ENCODE measurements at regions of chr17 and their contacts with region 1.

Region 1: DNA sequence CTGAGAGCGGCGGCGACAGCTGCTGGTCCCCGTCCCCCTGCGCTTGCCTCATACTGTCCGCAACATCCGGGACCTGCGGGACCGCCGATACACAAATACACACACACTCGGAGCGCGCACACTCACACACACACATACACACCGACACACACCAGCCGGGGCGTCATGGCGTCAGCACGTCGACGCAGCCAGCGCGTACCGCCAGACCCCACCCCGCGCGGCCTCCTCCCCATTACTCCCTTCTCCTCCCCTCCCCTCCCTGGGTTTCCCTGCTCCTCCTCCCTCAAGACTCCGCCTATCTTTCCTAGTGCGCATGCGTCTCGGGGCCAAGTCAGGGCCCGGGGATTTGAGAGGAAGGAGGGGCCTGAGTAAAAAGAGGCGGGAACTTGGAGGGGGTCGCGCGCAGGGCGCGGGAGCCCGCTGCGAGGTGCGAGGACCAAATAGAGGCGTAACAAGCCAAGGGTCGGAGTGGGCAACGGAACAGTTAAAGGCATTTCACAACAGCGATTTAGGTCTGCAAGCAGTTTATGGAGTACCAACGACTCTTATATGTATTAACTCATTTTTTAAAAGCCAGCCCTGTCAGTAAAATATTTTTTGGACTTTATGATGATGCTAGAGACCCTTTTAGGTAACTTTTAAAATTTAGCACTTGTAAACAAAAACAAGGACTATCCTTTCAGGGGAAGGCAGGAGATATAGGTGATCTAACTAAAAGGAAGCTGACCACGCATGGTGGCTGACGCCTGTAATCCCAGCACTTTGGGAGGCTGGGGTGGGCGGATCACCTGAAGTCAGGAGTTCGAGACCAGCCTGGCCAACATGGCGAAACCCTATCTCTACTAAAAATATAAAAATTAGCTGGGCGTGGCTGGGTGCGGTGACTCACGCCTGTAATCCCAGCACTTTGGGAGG is at the start of gene SPOP:
- H3K4me3 Mint-ChIP-seq: peak within 1 kb of the TSS; percentile 86
- H3K27ac Mint-ChIP-seq: peak within 1 kb of the TSS; percentile 96
- H3K4me1 Mint-ChIP-seq: peaks cover 62% of the 10 kb centered on the region
- H3K27me3 Mint-ChIP-seq: no peaks in the 10 kb centered on the region

Region 2: DNA sequence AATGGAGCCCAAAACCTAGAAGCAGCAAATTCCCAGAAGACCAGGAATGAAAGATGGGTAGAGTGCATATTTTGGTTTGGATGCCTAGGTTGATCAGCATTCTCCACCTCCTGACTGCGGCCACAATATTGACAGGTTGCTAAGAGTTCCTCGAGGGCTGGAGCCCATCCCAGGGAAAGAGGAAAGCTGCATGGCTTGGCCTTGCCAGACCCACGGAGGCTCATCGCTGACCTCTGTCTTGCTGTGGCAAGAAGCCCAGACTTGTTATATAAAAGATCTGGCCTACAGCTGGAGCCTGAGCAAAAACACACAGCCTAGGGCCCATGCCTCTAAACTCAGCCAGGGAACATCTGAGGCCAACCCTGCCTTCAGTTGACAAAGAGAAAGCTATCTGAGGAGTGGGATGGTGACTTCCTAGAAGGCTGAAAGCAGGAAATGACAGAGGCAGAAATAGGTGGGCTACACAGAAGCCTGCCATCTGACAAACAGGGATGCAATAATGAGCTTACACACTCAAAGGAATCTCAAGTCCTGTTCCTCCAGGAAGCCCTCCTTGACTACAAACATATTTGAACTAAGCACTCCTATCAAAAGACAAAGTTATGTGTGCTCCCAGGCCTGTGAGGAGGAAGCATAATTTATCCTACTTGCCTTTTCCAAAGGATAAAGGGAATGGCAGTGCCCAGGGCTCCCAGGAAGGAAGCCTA is 52.0 kb after region 1 on chr17:
- intact Hi-C with region 1: no loop called
- H3K4me3 Mint-ChIP-seq: no peak overlapping the region
- H3K27ac Mint-ChIP-seq: peak overlapping the region; percentile 9
- H3K4me1 Mint-ChIP-seq: peaks cover 48% of the 10 kb centered on the region
- H3K27me3 Mint-ChIP-seq: no peaks in the 10 kb centered on the region

Region 3: DNA sequence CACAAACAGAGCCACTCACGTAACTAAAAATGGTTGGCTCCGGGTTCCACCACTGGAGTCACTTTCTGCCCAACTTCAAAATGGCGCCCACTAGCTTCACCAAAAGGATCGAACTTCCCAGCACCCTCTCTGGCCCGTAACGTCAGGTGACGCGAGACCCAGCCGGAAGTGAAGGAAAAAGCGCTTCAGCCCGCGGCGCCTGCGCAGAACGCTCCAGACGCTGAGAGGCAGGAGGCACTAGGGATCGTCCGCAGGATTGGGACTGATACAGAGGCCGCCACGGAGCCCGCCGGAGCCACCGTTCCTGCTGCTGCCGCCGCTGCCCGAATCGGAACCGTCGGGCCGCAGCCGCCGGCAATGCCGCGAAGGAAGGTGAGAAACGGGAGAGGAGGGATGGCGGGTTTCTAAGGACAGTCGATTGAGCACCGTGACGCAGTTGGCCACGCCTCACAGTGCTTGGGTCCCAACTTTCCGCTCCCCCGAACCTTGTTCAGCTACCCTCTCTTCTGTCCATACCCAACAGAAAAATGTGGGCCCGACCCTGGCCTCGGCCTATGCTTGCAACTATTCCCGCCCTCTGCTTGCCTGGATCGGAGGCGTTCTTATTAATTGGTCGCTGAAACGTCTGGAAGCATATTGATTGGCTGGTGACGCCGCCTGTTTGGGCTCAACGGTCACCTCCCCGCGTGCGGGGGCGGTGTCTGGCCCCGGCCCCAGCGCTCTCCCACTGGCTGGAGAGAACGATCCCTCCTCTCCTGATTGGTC is 110.5 kb after region 1 on chr17 and contains the start of gene KAT7:
- intact Hi-C with region 1: loop called (anchors 1 kb)
- H3K4me3 Mint-ChIP-seq: peak within 1 kb of the TSS; percentile 92
- H3K27ac Mint-ChIP-seq: peak within 1 kb of the TSS; percentile 98
- H3K4me1 Mint-ChIP-seq: peaks cover 33% of the 10 kb centered on the region
- H3K27me3 Mint-ChIP-seq: no peaks in the 10 kb centered on the region

Region 4: DNA sequence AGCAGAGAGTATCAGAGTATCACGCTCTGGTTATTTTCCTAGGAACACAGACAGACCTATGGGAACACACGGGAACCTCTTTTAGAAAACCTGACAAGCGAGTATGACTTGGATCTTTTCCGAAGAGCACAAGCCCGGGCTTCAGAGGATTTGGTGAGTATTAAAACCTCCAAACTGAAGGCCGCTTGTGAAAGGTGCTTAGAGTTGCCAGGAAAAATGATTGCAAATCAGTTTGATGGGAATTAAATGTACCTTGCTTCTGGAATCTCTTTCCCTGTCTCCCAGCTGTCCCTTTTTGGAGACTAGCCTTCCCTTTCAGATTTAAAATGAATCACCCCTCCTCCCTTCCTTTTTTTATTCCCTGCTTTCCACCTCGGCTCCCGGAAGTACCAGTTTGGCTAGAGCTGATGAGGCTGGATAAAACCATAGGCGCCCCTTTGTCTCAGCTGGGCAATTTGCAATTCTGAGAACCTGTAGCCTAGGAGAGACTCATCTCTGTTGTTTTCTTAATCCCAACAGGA is 137.6 kb after region 1 on chr17:
- intact Hi-C with region 1: no loop called
- H3K4me3 Mint-ChIP-seq: no peak overlapping the region
- H3K27ac Mint-ChIP-seq: peak overlapping the region; percentile 19
- H3K4me1 Mint-ChIP-seq: peaks cover 13% of the 10 kb centered on the region
- H3K27me3 Mint-ChIP-seq: no peaks in the 10 kb centered on the region

Measured in dendritic cell treated with granulocyte-macrophage colony-stimulating factor and Interleukin-4, amounts not matched to agents 40 ng/mL and 50 ng/mL, for 4 days (primary cell).